Aorta (tissue), 5 donors: ENCODE measurements at regions of chr2 and their contacts with region 1.

Region 1: GRCh38 chr2:69118609-69119008 is 105.6 kb downstream of the ANTXR1 start:
- DNase-seq: peak in 1 of 2 donors; percentile 64
- ATAC-seq: peak; percentile 60
- H3K4me3 ChIP-seq: no peak overlapping the region
- H3K27ac ChIP-seq: peak overlapping the region; percentile 23 to 87
- H3K4me1 ChIP-seq: peaks cover 7 to 9% of the 10 kb centered on the region in 2 donors
- H3K27me3 ChIP-seq: no peaks in the 10 kb centered on the region

Region 2: GRCh38 chr2:68943581-68944568 is 174.7 kb before region 1 on chr2:
- intact Hi-C with region 1: no loop called
- DNase-seq: peak in 1 of 2 donors; percentile 57
- ATAC-seq: peak; percentile 85
- H3K4me3 ChIP-seq: no peak overlapping the region
- H3K27ac ChIP-seq: no peak overlapping the region
- H3K4me1 ChIP-seq: no peaks in the 10 kb centered on the region
- H3K27me3 ChIP-seq: no peaks in the 10 kb centered on the region

Region 3: DNA sequence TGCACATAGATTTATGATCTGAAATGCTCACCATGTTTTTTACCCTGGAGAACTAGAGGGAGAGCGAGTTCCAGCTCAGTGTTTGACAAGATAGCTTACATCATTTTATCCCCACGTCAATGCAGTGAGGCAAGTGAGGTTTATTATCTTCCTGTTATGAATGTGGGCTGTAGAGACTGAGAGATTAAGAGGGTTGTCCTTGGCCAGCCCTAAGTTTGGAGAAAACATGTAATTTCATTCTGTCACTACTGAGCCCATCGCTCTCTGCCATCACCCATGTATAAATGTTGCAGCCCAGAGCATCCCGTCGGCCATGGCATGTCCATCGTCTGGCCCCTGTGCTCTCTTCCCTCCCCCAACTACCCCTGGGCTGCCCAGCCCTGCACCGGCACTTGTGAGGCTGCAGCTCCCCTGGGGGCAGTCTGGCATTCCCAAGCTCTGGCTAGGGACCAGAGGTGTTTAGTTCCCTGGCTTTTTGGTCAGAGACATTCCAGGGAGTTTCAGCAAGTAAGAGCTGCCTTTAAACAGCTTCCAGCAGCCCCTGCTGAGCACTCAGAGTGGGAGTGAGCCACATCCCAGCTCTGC is 31.1 kb after region 1 on chr2:
- intact Hi-C with region 1: loop called in 1 of 2 experiments (anchors 2 kb)
- DNase-seq: peak; percentile 81 to 89
- ATAC-seq: peak; percentile 54
- H3K4me3 ChIP-seq: no peak overlapping the region
- H3K27ac ChIP-seq: peak overlapping the region in 1 of 2 donors; percentile 87
- H3K4me1 ChIP-seq: peaks cover 2 to 10% of the 10 kb centered on the region in 2 donors
- H3K27me3 ChIP-seq: no peaks in the 10 kb centered on the region

Region 4: GRCh38 chr2:69322631-69323030 is 204.0 kb after region 1 on chr2:
- intact Hi-C with region 1: no loop called
- DNase-seq: no peak
- ATAC-seq: no peak
- H3K4me3 ChIP-seq: no peak overlapping the region
- H3K27ac ChIP-seq: peak overlapping the region in 1 of 2 donors; percentile 63
- H3K4me1 ChIP-seq: no peaks in the 10 kb centered on the region
- H3K27me3 ChIP-seq: no peaks in the 10 kb centered on the region